Common myeloid progenitor, CD34-positive (primary cell): ENCODE measurements at regions of chr5 and their contacts with region 1.

Region 1: DNA sequence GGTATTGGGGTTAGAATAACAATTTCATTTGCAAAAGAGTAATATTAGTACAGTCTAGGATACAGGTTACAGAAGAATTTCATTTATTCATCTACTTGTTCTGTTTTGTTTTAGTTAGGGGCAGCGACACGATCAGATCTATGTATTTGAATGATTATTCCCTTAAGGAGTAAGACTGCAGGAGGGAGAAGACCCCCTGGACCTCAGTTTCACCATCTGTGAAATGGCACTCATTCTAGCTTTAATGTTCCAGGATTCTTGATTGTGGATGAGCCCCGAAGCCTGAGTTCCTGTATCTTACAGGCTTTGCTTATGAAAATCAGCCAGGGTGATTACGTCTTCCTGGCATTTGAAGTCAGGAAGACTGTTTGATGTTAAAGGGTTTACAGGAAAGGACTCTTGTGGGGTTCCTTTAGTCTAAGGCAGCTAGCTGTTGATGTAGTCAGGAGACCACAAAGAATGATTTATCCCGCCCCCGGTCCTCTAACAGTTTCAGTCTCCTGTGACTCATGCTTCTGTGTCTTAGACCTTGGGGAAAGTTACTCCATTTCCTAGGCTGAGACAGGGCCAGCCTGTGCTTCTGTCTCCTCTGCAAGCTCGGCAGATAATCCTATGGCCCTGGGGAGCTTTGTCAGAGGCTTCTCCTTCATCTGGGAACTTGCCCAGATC is 11.5 kb downstream of the SMIM3 start:
- DNase-seq: peak; percentile 89 to 98 (median 96)
- H3K4me3 ChIP-seq: peak overlapping the region in 5 of 7 experiments; percentile 11 to 64 (median 42)
- H3K27ac ChIP-seq: peak overlapping the region; percentile 69 to 79
- H3K4me1 ChIP-seq: peaks cover 47 to 68% (median 51%) of the 10 kb centered on the region in 4 experiments
- H3K27me3 ChIP-seq: no peaks in the 10 kb centered on the region

Region 2: GRCh38 chr5:150758531-150759333 is 31.3 kb before region 1 on chr5 and contains the start of gene DCTN4:
- CTCF ChIA-PET with region 1: interaction called, 12 read pairs
- POLR2A ChIA-PET with region 1: no interaction called
- DNase-seq: peak; percentile 98 to 99 (median 99)
- H3K4me3 ChIP-seq: peak within 1 kb of the TSS; percentile 74 to 98 (median 92)
- H3K27ac ChIP-seq: peak within 1 kb of the TSS; percentile 95 to 98
- H3K4me1 ChIP-seq: peaks cover 38 to 58% (median 47%) of the 10 kb centered on the region in 4 experiments
- H3K27me3 ChIP-seq: no peaks in the 10 kb centered on the region

Region 3: DNA sequence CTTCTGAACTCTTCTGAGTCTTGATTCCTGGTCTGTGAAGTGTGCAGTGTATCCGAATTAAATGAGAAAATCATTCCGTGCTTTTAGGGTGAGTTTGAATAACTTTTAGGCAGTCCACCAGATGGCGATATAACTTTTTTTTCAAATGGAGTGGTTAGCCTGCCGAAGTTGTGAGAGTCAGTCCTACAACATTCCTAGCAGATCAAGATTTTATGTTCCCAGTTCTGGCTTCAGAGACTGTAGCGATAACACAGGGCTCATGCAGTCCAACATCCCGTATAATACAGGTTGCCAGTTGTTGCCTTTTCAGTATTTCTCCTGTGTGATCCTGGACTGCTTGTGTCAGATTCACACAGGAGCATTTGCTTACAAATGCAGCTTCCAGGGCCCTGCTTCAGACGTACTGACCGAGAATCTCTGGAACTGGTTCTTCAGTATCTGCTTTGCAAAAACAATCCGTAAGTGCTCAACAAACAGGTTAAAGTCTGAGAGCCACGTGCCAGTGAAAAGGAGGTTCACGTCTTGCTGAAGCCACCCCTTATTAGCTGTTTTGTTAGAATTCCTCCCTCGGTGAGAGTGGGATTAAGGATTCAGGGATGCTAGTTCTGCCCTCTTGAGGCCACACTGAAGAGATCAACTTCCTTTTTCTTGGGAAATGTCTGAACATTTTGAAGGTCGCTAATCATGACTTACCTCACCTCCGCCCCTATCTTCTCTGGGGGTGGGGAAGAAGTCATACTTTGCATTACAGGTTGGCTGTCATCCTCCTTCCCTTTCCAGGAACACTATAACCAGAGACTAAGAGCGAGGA is 11.2 kb after region 1 on chr5:
- CTCF ChIA-PET with region 1: interaction called, 11 read pairs
- POLR2A ChIA-PET with region 1: interaction called, 6 read pairs
- DNase-seq: peak in 2 of 3 donors; percentile 62 to 63
- H3K4me3 ChIP-seq: peak overlapping the region in 5 of 7 experiments; percentile 24 to 75 (median 55)
- H3K27ac ChIP-seq: no peak overlapping the region
- H3K4me1 ChIP-seq: peaks cover 0 to 15% (median 8%) of the 10 kb centered on the region in 4 experiments
- H3K27me3 ChIP-seq: no peaks in the 10 kb centered on the region